CD8-positive, alpha-beta T cell (primary cell): ENCODE measurements at regions of chr2 and their contacts with region 1.

Region 1: DNA sequence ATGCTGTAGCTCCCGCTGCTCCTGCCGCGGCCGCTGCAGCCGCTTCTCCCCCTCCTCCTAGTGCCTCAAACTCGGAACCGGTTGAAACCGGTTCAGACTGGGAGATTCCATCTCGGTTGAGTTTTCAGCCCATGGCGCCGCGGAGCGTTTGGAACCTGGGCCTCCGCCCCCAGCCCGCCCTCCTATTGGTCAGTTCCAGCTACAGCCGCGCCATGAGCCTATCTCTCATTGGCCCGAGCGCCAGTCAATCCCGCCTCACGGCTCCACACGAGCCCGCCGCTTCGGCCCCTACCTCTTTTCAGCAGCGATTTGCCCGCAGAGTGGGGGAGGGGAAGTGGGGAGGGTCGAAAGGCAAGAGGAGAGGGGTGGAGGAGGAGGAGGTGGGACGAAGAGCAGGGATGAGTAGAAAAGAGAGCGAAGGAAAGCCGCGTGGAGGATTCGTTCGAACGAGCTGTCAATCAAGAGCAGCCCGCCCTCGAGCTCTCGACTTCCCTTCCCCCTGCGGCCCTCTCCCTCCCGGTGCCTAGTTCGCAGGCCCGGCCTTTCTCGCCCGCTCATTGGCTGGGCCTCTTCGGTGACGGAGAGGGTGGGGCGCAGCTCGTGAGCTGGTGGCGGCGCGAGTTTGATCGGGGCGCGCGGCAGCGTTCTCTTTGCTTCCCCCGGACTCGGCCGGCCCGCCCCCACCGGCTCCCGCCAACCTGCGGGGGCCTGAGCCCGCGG is at the start of gene XPO1:
- DNase-seq: peak; percentile 94 to 100 (median 99)
- ATAC-seq: peak; percentile 74
- H3K4me3 ChIP-seq: peak within 1 kb of the TSS; percentile 83 to 92
- H3K4me3 Mint-ChIP-seq: peak within 1 kb of the TSS; percentile 92
- H3K27ac ChIP-seq: peak within 1 kb of the TSS; percentile 100
- H3K27ac Mint-ChIP-seq: peak within 1 kb of the TSS; percentile 99
- H3K4me1 ChIP-seq: peaks cover 23% of the 10 kb centered on the region
- H3K4me1 Mint-ChIP-seq: peaks cover 38% of the 10 kb centered on the region
- H3K27me3 ChIP-seq: no peaks in the 10 kb centered on the region
- H3K27me3 Mint-ChIP-seq: no peaks in the 10 kb centered on the region
- CTCF ChIP-seq: no peak
- total RNA-seq, gene XPO1: 96.6 TPM

Region 2: DNA sequence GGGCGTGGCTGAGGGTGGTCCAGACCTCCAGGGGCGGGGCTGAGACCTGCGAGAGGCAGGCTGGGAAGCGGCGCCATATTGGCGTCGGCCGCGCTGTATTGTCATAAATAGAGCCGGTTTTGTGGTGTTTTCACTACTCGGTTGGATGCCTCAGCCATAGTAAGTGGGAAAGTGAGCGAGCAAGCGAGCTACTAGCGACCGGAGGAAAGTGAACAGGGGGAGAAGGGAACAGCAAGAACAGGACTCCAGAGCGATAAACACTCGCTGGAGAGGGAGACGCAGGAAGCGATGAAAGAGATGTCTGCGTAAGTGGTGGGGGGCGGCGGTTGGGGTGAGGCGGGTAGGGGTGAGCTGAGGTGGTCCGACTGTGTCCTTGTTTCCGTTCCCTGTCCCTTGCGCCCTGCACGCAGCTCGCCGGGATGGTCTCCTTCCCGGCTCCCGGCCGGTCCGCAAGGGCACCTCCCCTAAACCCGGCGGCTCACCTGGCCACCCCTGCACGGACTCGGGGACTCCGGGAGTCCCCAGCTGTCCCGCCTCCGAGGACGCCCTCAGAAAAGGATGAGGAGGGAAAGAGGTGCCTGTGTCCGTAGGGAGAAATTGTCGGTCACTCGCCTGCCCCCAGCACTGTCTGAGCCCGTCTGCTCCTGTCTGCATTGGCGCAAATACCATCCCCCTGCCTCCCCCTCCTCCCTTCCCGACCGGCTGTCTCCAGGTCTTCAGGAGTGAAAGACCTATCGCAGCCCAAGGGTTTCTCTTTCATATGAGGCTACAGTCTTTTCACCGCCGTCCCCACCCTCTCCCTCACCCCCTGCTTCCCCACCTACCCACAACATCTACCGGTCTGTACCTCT is 781.9 kb before region 1 on chr2 and contains the start of gene PAPOLG:
- CTCF ChIA-PET with region 1: no interaction called
- POLR2A ChIA-PET with region 1: no interaction called
- intact Hi-C with region 1: no loop called
- DNase-seq: peak; percentile 94 to 98 (median 97)
- ATAC-seq: peak; percentile 98
- H3K4me3 ChIP-seq: peak within 1 kb of the TSS; percentile 85 to 98
- H3K4me3 Mint-ChIP-seq: peak within 1 kb of the TSS; percentile 100
- H3K27ac ChIP-seq: peak within 1 kb of the TSS; percentile 86 to 91
- H3K27ac Mint-ChIP-seq: peak within 1 kb of the TSS; percentile 100
- H3K4me1 ChIP-seq: peaks cover 20% of the 10 kb centered on the region
- H3K4me1 Mint-ChIP-seq: peaks cover 43% of the 10 kb centered on the region
- H3K27me3 ChIP-seq: no peaks in the 10 kb centered on the region
- H3K27me3 Mint-ChIP-seq: no peaks in the 10 kb centered on the region
- CTCF ChIP-seq: no peak
- total RNA-seq, gene PAPOLG: 19.1 to 22.3 TPM

Region 3: DNA sequence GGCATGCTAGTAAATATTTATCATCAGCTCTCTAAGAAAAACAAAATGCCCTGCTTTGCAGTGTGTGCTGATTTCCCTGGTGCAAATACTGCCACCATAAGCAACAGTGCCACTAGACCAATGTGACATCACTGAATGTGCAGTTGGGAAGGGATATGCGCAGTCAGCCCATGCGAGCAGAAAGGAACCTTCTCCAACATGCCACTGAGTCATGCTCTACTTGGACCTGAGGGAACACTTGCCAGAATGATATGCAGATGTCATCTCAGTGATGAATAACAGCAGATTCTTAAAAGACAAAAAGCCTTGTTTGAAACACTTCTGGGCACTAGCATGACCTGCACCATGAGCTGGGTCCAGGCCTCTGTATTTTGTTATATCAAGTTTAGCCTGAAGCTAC is 712.2 kb before region 1 on chr2:
- CTCF ChIA-PET with region 1: no interaction called
- POLR2A ChIA-PET with region 1: no interaction called
- intact Hi-C with region 1: loop called in 1 of 2 experiments (anchors 10 kb)
- DNase-seq: no peak
- ATAC-seq: no peak
- H3K4me3 ChIP-seq: no peak overlapping the region
- H3K4me3 Mint-ChIP-seq: no peak overlapping the region
- H3K27ac ChIP-seq: no peak overlapping the region
- H3K27ac Mint-ChIP-seq: no peak overlapping the region
- H3K4me1 ChIP-seq: no peaks in the 10 kb centered on the region
- H3K4me1 Mint-ChIP-seq: peaks cover 6% of the 10 kb centered on the region
- H3K27me3 ChIP-seq: no peaks in the 10 kb centered on the region
- H3K27me3 Mint-ChIP-seq: peaks cover 6% of the 10 kb centered on the region
- CTCF ChIP-seq: no peak

Region 4: GRCh38 chr2:61065715-61066709 is 472.3 kb before region 1 on chr2 and contains the start of gene SANBR:
- CTCF ChIA-PET with region 1: no interaction called
- POLR2A ChIA-PET with region 1: no interaction called
- intact Hi-C with region 1: loop called in 1 of 2 experiments (anchors 5 kb)
- DNase-seq: peak; percentile 65 to 92 (median 79)
- ATAC-seq: peak; percentile 97
- H3K4me3 ChIP-seq: peak within 1 kb of the TSS; percentile 50 to 59
- H3K4me3 Mint-ChIP-seq: peak within 1 kb of the TSS; percentile 94
- H3K27ac ChIP-seq: no peak within 1 kb of the TSS
- H3K27ac Mint-ChIP-seq: peak within 1 kb of the TSS; percentile 82
- H3K4me1 ChIP-seq: peaks cover 4% of the 10 kb centered on the region
- H3K4me1 Mint-ChIP-seq: peaks cover 7% of the 10 kb centered on the region
- H3K27me3 ChIP-seq: no peaks in the 10 kb centered on the region
- H3K27me3 Mint-ChIP-seq: no peaks in the 10 kb centered on the region
- CTCF ChIP-seq: no peak
- total RNA-seq, gene SANBR: 0.52 to 0.67 TPM

Region 5: DNA sequence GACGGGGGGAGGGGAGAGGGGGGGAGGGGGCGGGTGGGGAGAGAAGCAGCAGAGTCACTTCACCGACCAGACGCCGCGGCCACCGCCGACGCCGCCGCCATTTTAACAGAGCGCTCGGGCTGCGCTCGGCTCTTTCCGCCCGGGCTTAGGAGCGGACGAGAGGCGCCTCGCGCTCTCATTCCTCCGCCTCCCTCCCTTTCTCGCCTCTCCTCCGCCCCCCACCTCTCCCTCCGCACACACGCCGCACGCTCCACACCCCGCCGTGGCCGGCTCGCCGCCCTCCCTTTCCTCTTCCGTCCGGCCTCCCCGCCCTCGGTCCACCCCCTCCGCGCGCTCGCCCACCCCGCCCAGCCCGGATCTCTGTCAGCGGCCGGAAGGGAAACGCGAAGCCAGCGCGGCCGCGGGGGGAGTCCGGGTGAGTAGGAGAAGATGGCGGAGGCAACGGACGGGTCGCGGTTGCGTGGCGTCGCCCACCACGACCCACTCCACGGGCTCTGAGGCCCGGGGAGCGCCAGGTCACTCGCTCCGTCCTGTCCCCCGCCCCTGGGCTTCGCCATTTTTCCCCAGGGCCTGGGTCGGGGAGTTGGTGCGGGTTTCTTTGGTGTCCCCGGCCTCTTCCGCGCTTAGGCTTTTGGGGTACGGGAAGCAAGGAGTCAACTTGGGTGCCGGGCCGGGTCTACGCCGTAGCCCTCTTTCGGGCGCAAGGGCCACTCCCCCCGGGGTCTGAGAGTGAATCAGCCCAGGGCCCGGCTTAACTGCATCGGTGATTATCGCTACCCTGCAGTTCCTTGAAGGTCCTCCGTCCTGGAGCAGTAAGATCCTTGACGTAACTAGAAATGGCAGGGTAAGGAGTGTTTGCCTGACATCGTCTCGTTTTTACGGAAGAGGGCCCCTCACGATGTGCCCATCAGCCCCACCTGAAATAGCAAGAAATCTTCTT is 67.1 kb before region 1 on chr2 and contains the start of gene USP34:
- CTCF ChIA-PET with region 1: interaction called, 4 read pairs
- POLR2A ChIA-PET with region 1: interaction called, 11 read pairs
- intact Hi-C with region 1: loop called (anchors 1 kb)
- DNase-seq: peak; percentile 90 to 98 (median 93)
- ATAC-seq: peak; percentile 85
- H3K4me3 ChIP-seq: peak within 1 kb of the TSS; percentile 77 to 99
- H3K4me3 Mint-ChIP-seq: peak within 1 kb of the TSS; percentile 92
- H3K27ac ChIP-seq: peak within 1 kb of the TSS; percentile 89 to 100
- H3K27ac Mint-ChIP-seq: peak within 1 kb of the TSS; percentile 98
- H3K4me1 ChIP-seq: peaks cover 35% of the 10 kb centered on the region
- H3K4me1 Mint-ChIP-seq: peaks cover 34% of the 10 kb centered on the region
- H3K27me3 ChIP-seq: no peaks in the 10 kb centered on the region
- H3K27me3 Mint-ChIP-seq: no peaks in the 10 kb centered on the region
- CTCF ChIP-seq: no peak
- total RNA-seq, gene USP34: 99.6 to 103 TPM

Region 6: DNA sequence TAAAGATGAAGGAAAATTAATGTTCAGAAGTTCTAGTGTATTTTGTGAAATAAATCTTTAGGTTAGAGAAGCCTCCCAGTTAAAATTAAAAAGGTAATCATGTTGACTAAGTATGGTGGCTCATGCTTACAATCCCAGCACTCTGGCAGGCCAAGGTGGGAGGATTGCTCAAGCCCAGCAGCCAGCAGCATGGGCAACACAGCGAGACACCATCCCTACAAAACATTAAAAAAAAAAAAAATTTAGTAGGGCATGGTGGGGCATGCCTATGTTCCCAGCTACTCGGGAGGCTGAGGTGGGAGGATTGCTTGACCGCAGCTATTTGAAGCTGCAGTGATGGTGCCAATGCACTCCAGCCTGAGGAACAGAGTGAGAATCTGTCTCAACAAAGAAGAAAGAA is 18.1 kb before region 1 on chr2:
- CTCF ChIA-PET with region 1: no interaction called
- POLR2A ChIA-PET with region 1: interaction called, 5 read pairs
- intact Hi-C with region 1: loop called in 1 of 2 experiments (anchors 1 kb)
- DNase-seq: no peak
- ATAC-seq: no peak
- H3K4me3 ChIP-seq: no peak overlapping the region
- H3K4me3 Mint-ChIP-seq: no peak overlapping the region
- H3K27ac ChIP-seq: no peak overlapping the region
- H3K27ac Mint-ChIP-seq: peak overlapping the region; percentile 71
- H3K4me1 ChIP-seq: peaks cover 4% of the 10 kb centered on the region
- H3K4me1 Mint-ChIP-seq: peaks cover 38% of the 10 kb centered on the region
- H3K27me3 ChIP-seq: no peaks in the 10 kb centered on the region
- H3K27me3 Mint-ChIP-seq: no peaks in the 10 kb centered on the region
- CTCF ChIP-seq: no peak

Region 7: DNA sequence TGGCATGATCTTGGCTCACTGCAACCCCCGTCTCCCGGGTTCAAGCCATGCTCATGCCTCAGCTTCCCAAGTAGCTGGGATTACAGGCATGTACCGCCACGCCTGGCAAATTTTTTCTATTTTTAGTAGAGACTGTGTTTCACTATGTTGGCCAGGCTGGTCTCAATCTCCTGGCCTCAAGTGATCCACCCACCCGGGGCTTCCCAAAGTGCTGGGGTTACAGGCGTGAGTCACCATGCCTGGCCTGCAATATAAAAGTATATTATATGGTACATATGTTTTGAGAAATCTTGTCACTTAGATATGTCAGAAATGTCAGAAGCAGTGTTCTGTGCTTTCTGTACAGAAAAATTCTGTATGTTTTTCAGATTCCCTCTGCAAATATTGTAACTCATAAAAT is 19.0 kb after region 1 on chr2:
- CTCF ChIA-PET with region 1: no interaction called
- POLR2A ChIA-PET with region 1: no interaction called
- intact Hi-C with region 1: no loop called
- DNase-seq: no peak
- ATAC-seq: no peak
- H3K4me3 ChIP-seq: no peak overlapping the region
- H3K4me3 Mint-ChIP-seq: no peak overlapping the region
- H3K27ac ChIP-seq: no peak overlapping the region
- H3K27ac Mint-ChIP-seq: no peak overlapping the region
- H3K4me1 ChIP-seq: no peaks in the 10 kb centered on the region
- H3K4me1 Mint-ChIP-seq: no peaks in the 10 kb centered on the region
- H3K27me3 ChIP-seq: no peaks in the 10 kb centered on the region
- H3K27me3 Mint-ChIP-seq: no peaks in the 10 kb centered on the region
- CTCF ChIP-seq: no peak

Region 8: GRCh38 chr2:61694312-61695274 is 156.2 kb after region 1 on chr2:
- CTCF ChIA-PET with region 1: no interaction called
- POLR2A ChIA-PET with region 1: no interaction called
- intact Hi-C with region 1: loop called (anchors 1 to 5 kb)
- DNase-seq: peak; percentile 65 to 89 (median 82)
- ATAC-seq: peak; percentile 95
- H3K4me3 ChIP-seq: peak overlapping the region; percentile 88 to 93
- H3K4me3 Mint-ChIP-seq: peak overlapping the region; percentile 90
- H3K27ac ChIP-seq: peak overlapping the region; percentile 43 to 63
- H3K27ac Mint-ChIP-seq: peak overlapping the region; percentile 87
- H3K4me1 ChIP-seq: peaks cover 14% of the 10 kb centered on the region
- H3K4me1 Mint-ChIP-seq: peaks cover 16% of the 10 kb centered on the region
- H3K27me3 ChIP-seq: no peaks in the 10 kb centered on the region
- H3K27me3 Mint-ChIP-seq: no peaks in the 10 kb centered on the region
- CTCF ChIP-seq: peak; percentile 52

Region 9: GRCh38 chr2:61854474-61855182 is 316.3 kb after region 1 on chr2:
- CTCF ChIA-PET with region 1: no interaction called
- POLR2A ChIA-PET with region 1: interaction called, 7 read pairs
- intact Hi-C with region 1: loop called (anchors 1 to 2 kb)
- DNase-seq: peak; percentile 80 to 98 (median 87)
- ATAC-seq: peak; percentile 89
- H3K4me3 ChIP-seq: peak overlapping the region; percentile 79 to 88
- H3K4me3 Mint-ChIP-seq: peak overlapping the region; percentile 97
- H3K27ac ChIP-seq: peak overlapping the region; percentile 64 to 81
- H3K27ac Mint-ChIP-seq: peak overlapping the region; percentile 96
- H3K4me1 ChIP-seq: peaks cover 12% of the 10 kb centered on the region
- H3K4me1 Mint-ChIP-seq: peaks cover 15% of the 10 kb centered on the region
- H3K27me3 ChIP-seq: no peaks in the 10 kb centered on the region
- H3K27me3 Mint-ChIP-seq: no peaks in the 10 kb centered on the region
- CTCF ChIP-seq: no peak